Kidney (tissue), 22 donors: ENCODE measurements at regions of chr11 and their contacts with region 1.

Region 1: GRCh38 chr11:59753650-59754493 is 1.3 kb upstream of the STX3 start:
- DNase-seq: peak; percentile 82 to 93 (median 88)
- H3K4me3 ChIP-seq: peak overlapping the region; percentile 73 to 97 (median 95)
- H3K27ac ChIP-seq: peak overlapping the region; percentile 95 to 96
- H3K4me1 ChIP-seq: peaks cover 0 to 16% (median 12%) of the 10 kb centered on the region in 3 donors
- H3K27me3 ChIP-seq: no peaks in the 10 kb centered on the region
- CTCF ChIP-seq: peak; percentile 92

Region 2: GRCh38 chr11:59802639-59803176 is 48.8 kb after region 1 on chr11:
- intact Hi-C with region 1: loop called (anchors 5 kb)
- DNase-seq: peak in 2 of 5 donors; percentile 64 to 74
- H3K4me3 ChIP-seq: no peak overlapping the region
- H3K27ac ChIP-seq: no peak overlapping the region
- H3K4me1 ChIP-seq: peaks cover 0 to 3% (median 0%) of the 10 kb centered on the region in 3 donors
- H3K27me3 ChIP-seq: no peaks in the 10 kb centered on the region
- CTCF ChIP-seq: peak; percentile 69